PC-3 (cell line): ENCODE measurements at regions of chr2 and their contacts with region 1.

Region 1: GRCh38 chr2:176814306-176815052 is 398.1 kb upstream of the HNRNPA3 start:
- DNase-seq: peak; percentile 70
- ATAC-seq: peak; percentile 89
- H3K4me3 ChIP-seq: peak overlapping the region; percentile 32; the same call in 1 of the 2 replicates
- H3K27ac ChIP-seq: no peak overlapping the region
- H3K4me1 ChIP-seq: peaks cover 14% of the 10 kb centered on the region
- H3K27me3 ChIP-seq: peaks cover 5% of the 10 kb centered on the region
- CTCF ChIP-seq: peak; percentile 56

Region 2: DNA sequence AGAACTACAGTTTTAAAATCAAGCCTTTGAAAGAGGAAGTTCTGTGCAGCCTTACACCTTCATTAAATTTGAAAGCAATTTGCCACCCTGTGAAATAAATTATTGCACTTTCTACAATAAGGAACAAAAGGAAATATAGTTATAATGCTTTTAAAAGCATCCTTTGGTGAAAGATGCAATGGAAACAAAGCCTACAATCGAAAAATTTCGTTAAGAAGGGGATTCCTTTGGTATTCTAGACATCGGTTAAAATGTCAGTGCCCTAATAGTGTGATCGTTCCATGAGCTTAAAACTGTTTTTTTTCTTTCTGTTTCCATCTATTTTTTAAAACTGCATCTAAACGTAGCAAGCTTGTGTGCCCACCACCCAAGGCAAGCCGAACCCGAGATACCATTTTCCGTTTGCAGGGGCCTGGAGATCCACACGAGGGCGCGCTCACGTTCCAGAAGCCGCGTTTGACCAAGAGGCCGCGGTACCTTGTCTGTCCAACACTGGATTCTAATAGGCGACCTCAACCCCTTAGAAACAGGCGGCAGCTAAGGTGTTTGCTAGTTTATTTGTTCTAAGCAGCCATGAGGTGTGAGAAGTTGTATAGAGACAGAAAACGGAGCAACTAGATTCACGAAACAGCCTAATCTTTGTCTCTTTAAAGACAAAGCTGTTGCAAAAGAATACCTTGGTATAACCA is 703.4 kb before region 1 on chr2:
- CTCF ChIA-PET with region 1: no interaction called
- POLR2A ChIA-PET with region 1: no interaction called
- intact Hi-C with region 1: loop called (anchors 5 kb)
- DNase-seq: peak; percentile 65
- ATAC-seq: peak; percentile 72
- H3K4me3 ChIP-seq: no peak overlapping the region
- H3K27ac ChIP-seq: no peak overlapping the region
- H3K4me1 ChIP-seq: peaks cover 4% of the 10 kb centered on the region; the same call in 1 of the 2 replicates
- H3K27me3 ChIP-seq: peaks cover 38% of the 10 kb centered on the region
- CTCF ChIP-seq: peak; percentile 91

Region 3: GRCh38 chr2:176445956-176446355 is 368.5 kb before region 1 on chr2:
- CTCF ChIA-PET with region 1: no interaction called
- POLR2A ChIA-PET with region 1: no interaction called
- intact Hi-C with region 1: loop called (anchors 10 kb)
- DNase-seq: peak; percentile 85
- ATAC-seq: peak; percentile 86
- H3K4me3 ChIP-seq: no peak overlapping the region
- H3K27ac ChIP-seq: peak overlapping the region; percentile 87
- H3K4me1 ChIP-seq: peaks cover 30% of the 10 kb centered on the region
- H3K27me3 ChIP-seq: no peaks in the 10 kb centered on the region
- CTCF ChIP-seq: peak; percentile 21; the same call in 1 of the 2 replicates

Region 4: DNA sequence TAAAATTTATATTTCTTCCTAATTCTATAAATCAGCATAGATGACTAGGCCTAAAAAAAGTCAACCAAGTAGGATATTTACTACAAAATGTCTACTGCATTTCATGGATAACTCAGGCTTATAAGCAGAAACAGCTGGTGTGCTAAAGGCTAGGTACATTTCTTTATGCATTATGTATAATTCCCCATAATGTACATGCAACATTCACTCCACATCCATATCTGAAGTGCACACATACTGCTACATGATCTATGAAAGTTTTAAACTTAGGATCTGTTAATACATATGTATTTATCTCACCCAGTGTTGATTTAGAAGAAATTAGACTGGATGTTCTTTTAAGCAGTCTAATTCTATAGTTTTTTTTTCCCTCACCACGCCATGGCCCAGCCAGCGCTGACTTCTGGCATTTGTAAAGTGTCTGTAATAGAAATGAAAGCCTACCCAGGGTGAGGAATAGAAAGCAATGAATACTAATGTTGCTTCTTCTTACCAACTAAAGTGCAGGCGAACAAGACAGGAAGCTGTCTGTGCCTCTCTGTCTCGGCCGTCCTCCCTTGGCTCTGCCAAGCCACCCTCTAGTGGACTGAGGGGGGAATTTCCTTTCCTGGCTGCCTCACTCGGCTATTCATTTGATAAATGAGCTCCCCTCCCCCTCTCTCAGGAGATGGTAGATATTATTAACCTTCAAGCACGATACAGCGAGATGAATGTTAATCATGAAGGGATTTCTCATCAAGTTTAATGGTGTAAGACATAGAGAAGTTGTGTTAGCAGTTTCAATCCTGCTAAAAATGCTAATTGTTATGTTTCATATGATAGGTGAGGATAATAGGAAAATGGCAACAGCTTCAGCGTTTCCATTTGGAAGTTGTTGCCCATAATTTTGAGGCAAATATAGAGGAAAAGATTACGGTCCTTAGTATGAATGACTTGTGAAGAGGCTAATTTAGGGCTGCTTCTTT is 160.7 kb before region 1 on chr2:
- CTCF ChIA-PET with region 1: interaction called, 11 read pairs
- POLR2A ChIA-PET with region 1: no interaction called
- intact Hi-C with region 1: loop called (anchors 1 kb)
- DNase-seq: peak; percentile 89
- ATAC-seq: peak; percentile 89
- H3K4me3 ChIP-seq: no peak overlapping the region
- H3K27ac ChIP-seq: no peak overlapping the region
- H3K4me1 ChIP-seq: no peaks in the 10 kb centered on the region
- H3K27me3 ChIP-seq: no peaks in the 10 kb centered on the region
- CTCF ChIP-seq: peak; percentile 85

Region 5: GRCh38 chr2:176774766-176775451 is 39.6 kb before region 1 on chr2:
- CTCF ChIA-PET with region 1: no interaction called
- POLR2A ChIA-PET with region 1: no interaction called
- intact Hi-C with region 1: no loop called
- DNase-seq: no peak
- ATAC-seq: no peak
- H3K4me3 ChIP-seq: no peak overlapping the region
- H3K27ac ChIP-seq: no peak overlapping the region
- H3K4me1 ChIP-seq: no peaks in the 10 kb centered on the region
- H3K27me3 ChIP-seq: peaks cover 23% of the 10 kb centered on the region
- CTCF ChIP-seq: no peak

Region 6: GRCh38 chr2:176804392-176804791 is 10.1 kb before region 1 on chr2:
- CTCF ChIA-PET with region 1: no interaction called
- POLR2A ChIA-PET with region 1: no interaction called
- intact Hi-C with region 1: no loop called
- DNase-seq: no peak
- ATAC-seq: no peak
- H3K4me3 ChIP-seq: no peak overlapping the region
- H3K27ac ChIP-seq: no peak overlapping the region
- H3K4me1 ChIP-seq: no peaks in the 10 kb centered on the region
- H3K27me3 ChIP-seq: peaks cover 5% of the 10 kb centered on the region; the same call in 1 of the 2 replicates
- CTCF ChIP-seq: no peak